ENCODE measurements at regions of chr7 and their contacts with region 1.

Region 1: GRCh38 chr7:39894904-39895303 is 55.2 kb upstream of the CDK13 start:
- DNase-seq: no peak
- H3K4me3 Mint-ChIP-seq: no peak overlapping the region
- H3K27ac Mint-ChIP-seq: no peak overlapping the region
- H3K4me1 Mint-ChIP-seq: no peaks in the 10 kb centered on the region
- H3K27me3 Mint-ChIP-seq: peaks cover 4% of the 10 kb centered on the region

Region 2: GRCh38 chr7:39453743-39454355 is 441.1 kb before region 1 on chr7:
- intact Hi-C with region 1: no loop called
- DNase-seq: peak; percentile 26
- H3K4me3 Mint-ChIP-seq: no peak overlapping the region
- H3K27ac Mint-ChIP-seq: no peak overlapping the region
- H3K4me1 Mint-ChIP-seq: no peaks in the 10 kb centered on the region
- H3K27me3 Mint-ChIP-seq: peaks cover 14% of the 10 kb centered on the region

Region 3: GRCh38 chr7:39987476-39988347 is 92.8 kb after region 1 on chr7:
- intact Hi-C with region 1: loop called (anchors 5 kb)
- DNase-seq: no peak
- H3K4me3 Mint-ChIP-seq: no peak overlapping the region
- H3K27ac Mint-ChIP-seq: peak overlapping the region; percentile 30
- H3K4me1 Mint-ChIP-seq: peaks cover 30% of the 10 kb centered on the region
- H3K27me3 Mint-ChIP-seq: no peaks in the 10 kb centered on the region

Region 4: DNA sequence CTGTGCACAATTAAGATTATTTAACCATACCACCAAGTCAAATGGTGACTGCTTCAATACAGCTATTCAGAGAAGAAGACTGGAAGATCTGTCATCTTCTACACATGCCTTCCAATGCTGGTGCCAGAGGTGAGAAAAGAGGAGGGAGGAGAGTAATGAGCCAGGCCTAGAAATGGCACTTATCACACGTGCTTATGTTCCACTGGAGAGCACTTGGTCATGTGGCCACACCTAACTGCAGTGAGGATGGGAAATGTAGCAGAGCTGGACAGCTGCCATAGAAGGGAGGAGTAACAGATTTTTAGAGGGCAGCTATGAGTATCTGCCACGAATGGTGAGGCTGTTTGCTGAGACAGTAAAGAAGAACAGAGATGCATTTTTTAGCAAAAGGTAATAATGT is 162.4 kb after region 1 on chr7:
- intact Hi-C with region 1: loop called (anchors 1 kb)
- DNase-seq: no peak
- H3K4me3 Mint-ChIP-seq: no peak overlapping the region
- H3K27ac Mint-ChIP-seq: no peak overlapping the region
- H3K4me1 Mint-ChIP-seq: peaks cover 4% of the 10 kb centered on the region
- H3K27me3 Mint-ChIP-seq: no peaks in the 10 kb centered on the region

Measured in activated T-helper 1 cell treated with anti-CD3 and anti-CD28 coated beads, Interleukin-12 subunit alpha, Interleukin-12 subunit beta, Interleukin-2, Interleukin-4 antibody, amounts not matched to agents 30 ng/mL and 10 ng/mL and 1 ng/mL, durations not matched to agents 14 hours and 24 hours and 36 hours (primary cell).